RWPE1 (cell line): ENCODE measurements at regions of chr6 and their contacts with region 1.

Region 1: GRCh38 chr6:112163295-112164257 is 76.2 kb downstream of the FAM229B start:
- DNase-seq: peak; percentile 75
- H3K27ac ChIP-seq: no peak overlapping the region
- CTCF ChIP-seq: peak; percentile 95

Region 2: GRCh38 chr6:112087136-112087911 is 76.3 kb before region 1 on chr6 and contains the starts of genes FAM229B and TUBE1:
- CTCF ChIA-PET with region 1: interaction called, 28 read pairs
- POLR2A ChIA-PET with region 1: no interaction called
- DNase-seq: peak; percentile 71
- H3K27ac ChIP-seq: peak within 1 kb of the TSS; percentile 83
- CTCF ChIP-seq: no peak